Activated CD8-positive, alpha-beta memory T cell treated with anti-CD3 and anti-CD28 coated beads, Interleukin-2, amount 10 ng/mL, durations not matched to agents 7 days and 5 days (primary cell): ENCODE measurements at regions of chr6 and their contacts with region 1.

Region 1: GRCh38 chr6:57172136-57173055 is at the start of gene BAG2:
- DNase-seq: peak; percentile 95
- ATAC-seq: peak; percentile 90
- H3K4me3 Mint-ChIP-seq: peak within 1 kb of the TSS; percentile 86
- H3K27ac Mint-ChIP-seq: peak within 1 kb of the TSS; percentile 94
- H3K4me1 Mint-ChIP-seq: peaks cover 46% of the 10 kb centered on the region
- H3K27me3 Mint-ChIP-seq: no peaks in the 10 kb centered on the region
- total RNA-seq, gene BAG2: 9.6 to 10.3 TPM

Region 2: GRCh38 chr6:57267586-57268293 is 95.3 kb after region 1 on chr6:
- CTCF ChIA-PET with region 1: no interaction called
- DNase-seq: no peak
- ATAC-seq: no peak
- H3K4me3 Mint-ChIP-seq: no peak overlapping the region
- H3K27ac Mint-ChIP-seq: no peak overlapping the region
- H3K4me1 Mint-ChIP-seq: peaks cover 6% of the 10 kb centered on the region
- H3K27me3 Mint-ChIP-seq: peaks cover 9% of the 10 kb centered on the region

Region 3: DNA sequence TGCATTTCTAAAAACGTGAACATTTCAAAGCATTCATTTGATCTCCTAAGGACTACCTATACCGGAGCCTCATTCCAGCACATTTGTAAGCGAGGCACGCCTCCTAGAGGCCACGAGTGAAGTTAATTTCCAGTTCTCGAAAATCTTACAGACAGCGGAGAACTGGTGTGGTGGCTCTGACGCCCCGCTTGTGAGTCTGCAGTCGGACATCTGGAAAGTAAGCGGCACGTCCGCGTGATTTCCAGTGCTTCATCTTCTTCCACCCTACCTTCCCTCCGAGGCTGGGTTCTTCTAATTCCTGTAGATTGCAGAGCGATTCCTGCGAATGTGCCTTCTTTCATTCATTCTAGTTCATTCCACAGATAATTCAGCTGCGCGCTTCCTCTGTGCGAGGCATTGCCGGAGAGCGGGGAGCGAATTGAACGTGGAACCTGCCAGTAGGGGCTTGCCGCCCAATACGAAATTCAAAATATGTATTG is 144.2 kb after region 1 on chr6:
- CTCF ChIA-PET with region 1: interaction called, 10 read pairs
- DNase-seq: peak; percentile 90
- ATAC-seq: peak; percentile 85
- H3K4me3 Mint-ChIP-seq: peak overlapping the region; percentile 96
- H3K27ac Mint-ChIP-seq: peak overlapping the region; percentile 96
- H3K4me1 Mint-ChIP-seq: peaks cover 38% of the 10 kb centered on the region
- H3K27me3 Mint-ChIP-seq: peaks cover 15% of the 10 kb centered on the region